Naive thymus-derived CD4-positive, alpha-beta T cell (primary cell): ENCODE measurements at regions of chr20 and their contacts with region 1.

Region 1: GRCh38 chr20:1118336-1119127 is at the start of gene PSMF1:
- DNase-seq: peak; percentile 93 to 99 (median 96)
- ATAC-seq: peak; percentile 98
- H3K4me3 ChIP-seq: peak within 1 kb of the TSS; percentile 98
- H3K4me3 Mint-ChIP-seq: peak within 1 kb of the TSS; percentile 92 to 97 (median 94)
- H3K27ac ChIP-seq: peak within 1 kb of the TSS; percentile 85
- H3K27ac Mint-ChIP-seq: peak within 1 kb of the TSS; percentile 81 to 97 (median 94)
- H3K4me1 ChIP-seq: peaks cover 40 to 45% of the 10 kb centered on the region in 2 donors
- H3K4me1 Mint-ChIP-seq: peaks cover 46 to 68% (median 61%) of the 10 kb centered on the region in 7 donors
- H3K27me3 ChIP-seq: no peaks in the 10 kb centered on the region
- H3K27me3 Mint-ChIP-seq: no peaks in the 10 kb centered on the region
- total RNA-seq, gene PSMF1: 88.7 to 157 (median 114) TPM

Region 2: GRCh38 chr20:543369-544152 is 575.0 kb before region 1 on chr20 and contains the start of gene CSNK2A1:
- CTCF ChIA-PET with region 1: no interaction called
- POLR2A ChIA-PET with region 1: no interaction called
- intact Hi-C with region 1: loop called (anchors 1 to 2 kb)
- DNase-seq: peak; percentile 93 to 99 (median 97)
- ATAC-seq: peak; percentile 97
- H3K4me3 ChIP-seq: peak within 1 kb of the TSS; percentile 59
- H3K4me3 Mint-ChIP-seq: peak within 1 kb of the TSS; percentile 86 to 100 (median 91)
- H3K27ac ChIP-seq: peak within 1 kb of the TSS; percentile 94
- H3K27ac Mint-ChIP-seq: peak within 1 kb of the TSS; percentile 97 to 100 (median 98)
- H3K4me1 ChIP-seq: peaks cover 17 to 39% of the 10 kb centered on the region in 2 donors
- H3K4me1 Mint-ChIP-seq: peaks cover 40 to 58% (median 54%) of the 10 kb centered on the region in 7 donors
- H3K27me3 ChIP-seq: no peaks in the 10 kb centered on the region
- H3K27me3 Mint-ChIP-seq: peaks cover 0 to 9% (median 5%) of the 10 kb centered on the region in 5 donors
- total RNA-seq, gene CSNK2A1: 69.7 to 117 (median 90.8) TPM

Region 3: GRCh38 chr20:986733-987355 is 131.7 kb before region 1 on chr20:
- CTCF ChIA-PET with region 1: no interaction called
- POLR2A ChIA-PET with region 1: no interaction called
- intact Hi-C with region 1: no loop called
- DNase-seq: no peak
- ATAC-seq: no peak
- H3K4me3 ChIP-seq: no peak overlapping the region
- H3K4me3 Mint-ChIP-seq: no peak overlapping the region
- H3K27ac ChIP-seq: no peak overlapping the region
- H3K27ac Mint-ChIP-seq: no peak overlapping the region
- H3K4me1 ChIP-seq: no peaks in the 10 kb centered on the region
- H3K4me1 Mint-ChIP-seq: no peaks in the 10 kb centered on the region
- H3K27me3 ChIP-seq: no peaks in the 10 kb centered on the region
- H3K27me3 Mint-ChIP-seq: peaks cover 13 to 49% (median 30%) of the 10 kb centered on the region in 5 donors

Region 4: GRCh38 chr20:1015181-1015580 is 103.4 kb before region 1 on chr20:
- CTCF ChIA-PET with region 1: no interaction called
- POLR2A ChIA-PET with region 1: no interaction called
- intact Hi-C with region 1: no loop called
- DNase-seq: no peak
- ATAC-seq: no peak
- H3K4me3 ChIP-seq: no peak overlapping the region
- H3K4me3 Mint-ChIP-seq: no peak overlapping the region
- H3K27ac ChIP-seq: no peak overlapping the region
- H3K27ac Mint-ChIP-seq: no peak overlapping the region
- H3K4me1 ChIP-seq: no peaks in the 10 kb centered on the region
- H3K4me1 Mint-ChIP-seq: peaks cover 0 to 3% (median 0%) of the 10 kb centered on the region in 7 donors
- H3K27me3 ChIP-seq: no peaks in the 10 kb centered on the region
- H3K27me3 Mint-ChIP-seq: peaks cover 0 to 25% (median 12%) of the 10 kb centered on the region in 5 donors

Region 5: GRCh38 chr20:1144401-1145172 is 26.1 kb after region 1 on chr20:
- CTCF ChIA-PET with region 1: no interaction called
- POLR2A ChIA-PET with region 1: no interaction called
- intact Hi-C with region 1: no loop called
- DNase-seq: no peak
- ATAC-seq: no peak
- H3K4me3 ChIP-seq: no peak overlapping the region
- H3K4me3 Mint-ChIP-seq: no peak overlapping the region
- H3K27ac ChIP-seq: no peak overlapping the region
- H3K27ac Mint-ChIP-seq: no peak overlapping the region
- H3K4me1 ChIP-seq: no peaks in the 10 kb centered on the region
- H3K4me1 Mint-ChIP-seq: peaks cover 7 to 43% (median 23%) of the 10 kb centered on the region in 7 donors
- H3K27me3 ChIP-seq: no peaks in the 10 kb centered on the region
- H3K27me3 Mint-ChIP-seq: no peaks in the 10 kb centered on the region

Region 6: GRCh38 chr20:1266167-1266973 is 147.8 kb after region 1 on chr20 and contains the start of gene SNPH:
- CTCF ChIA-PET with region 1: no interaction called
- POLR2A ChIA-PET with region 1: no interaction called
- intact Hi-C with region 1: loop called (anchors 1 to 2 kb)
- DNase-seq: peak; percentile 41 to 79 (median 67)
- ATAC-seq: peak; percentile 93
- H3K4me3 ChIP-seq: peak within 1 kb of the TSS; percentile 66
- H3K4me3 Mint-ChIP-seq: peak within 1 kb of the TSS; percentile 79 to 99 (median 93)
- H3K27ac ChIP-seq: peak within 1 kb of the TSS; percentile 88
- H3K27ac Mint-ChIP-seq: peak within 1 kb of the TSS; percentile 77 to 100 (median 98)
- H3K4me1 ChIP-seq: peaks cover 9 to 54% of the 10 kb centered on the region in 2 donors
- H3K4me1 Mint-ChIP-seq: peaks cover 22 to 87% (median 81%) of the 10 kb centered on the region in 7 donors
- H3K27me3 ChIP-seq: no peaks in the 10 kb centered on the region
- H3K27me3 Mint-ChIP-seq: peaks cover 0 to 5% (median 0%) of the 10 kb centered on the region in 5 donors
- total RNA-seq, gene SNPH: 7.3 to 43.4 (median 22.5) TPM

Region 7: DNA sequence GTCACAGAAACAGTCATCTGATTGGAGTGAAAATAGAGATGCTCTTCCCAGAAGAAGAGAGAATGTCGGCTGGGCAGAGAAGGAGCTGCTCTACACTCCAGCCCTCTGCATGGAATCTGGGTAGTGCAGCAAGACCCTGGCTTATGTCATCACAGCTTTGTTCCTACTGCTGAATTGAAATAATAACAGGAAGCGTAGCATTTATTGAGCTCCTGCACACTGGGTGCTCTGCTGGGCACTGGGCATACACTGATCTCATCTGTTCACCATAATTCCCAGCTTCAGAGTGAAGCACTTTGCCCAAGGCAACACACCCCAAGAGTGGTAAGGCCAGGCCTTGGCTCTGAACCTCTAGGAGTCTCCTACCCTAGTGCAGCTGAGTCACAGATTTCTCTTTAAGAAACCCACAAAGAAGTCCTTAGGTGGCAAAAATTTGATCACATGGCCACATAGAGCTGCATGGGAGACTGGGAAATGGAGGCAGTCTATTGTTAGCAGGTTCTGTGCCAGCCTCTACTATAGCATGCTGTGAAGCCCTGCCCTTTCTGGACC is 214.3 kb after region 1 on chr20:
- CTCF ChIA-PET with region 1: no interaction called
- POLR2A ChIA-PET with region 1: no interaction called
- intact Hi-C with region 1: no loop called
- DNase-seq: no peak
- ATAC-seq: no peak
- H3K4me3 ChIP-seq: no peak overlapping the region
- H3K4me3 Mint-ChIP-seq: no peak overlapping the region
- H3K27ac ChIP-seq: no peak overlapping the region
- H3K27ac Mint-ChIP-seq: peak overlapping the region in 3 of 9 donors; percentile 28 to 99 (median 52)
- H3K4me1 ChIP-seq: peaks cover 0 to 15% of the 10 kb centered on the region in 2 donors
- H3K4me1 Mint-ChIP-seq: peaks cover 31 to 67% (median 57%) of the 10 kb centered on the region in 7 donors
- H3K27me3 ChIP-seq: no peaks in the 10 kb centered on the region
- H3K27me3 Mint-ChIP-seq: no peaks in the 10 kb centered on the region

Region 8: GRCh38 chr20:1437235-1437904 is 318.8 kb after region 1 on chr20:
- CTCF ChIA-PET with region 1: no interaction called
- POLR2A ChIA-PET with region 1: no interaction called
- intact Hi-C with region 1: loop called in 1 of 2 experiments (anchors 1 kb)
- DNase-seq: peak; percentile 55 to 79 (median 72)
- ATAC-seq: peak; percentile 72
- H3K4me3 ChIP-seq: no peak overlapping the region
- H3K4me3 Mint-ChIP-seq: peak overlapping the region in 1 of 10 donors; percentile 35
- H3K27ac ChIP-seq: no peak overlapping the region
- H3K27ac Mint-ChIP-seq: peak overlapping the region in 3 of 9 donors; percentile 8 to 73 (median 16)
- H3K4me1 ChIP-seq: peaks cover 11 to 17% of the 10 kb centered on the region in 2 donors
- H3K4me1 Mint-ChIP-seq: peaks cover 25 to 53% (median 49%) of the 10 kb centered on the region in 7 donors
- H3K27me3 ChIP-seq: no peaks in the 10 kb centered on the region
- H3K27me3 Mint-ChIP-seq: peaks cover 0 to 19% (median 0%) of the 10 kb centered on the region in 5 donors

Region 9: DNA sequence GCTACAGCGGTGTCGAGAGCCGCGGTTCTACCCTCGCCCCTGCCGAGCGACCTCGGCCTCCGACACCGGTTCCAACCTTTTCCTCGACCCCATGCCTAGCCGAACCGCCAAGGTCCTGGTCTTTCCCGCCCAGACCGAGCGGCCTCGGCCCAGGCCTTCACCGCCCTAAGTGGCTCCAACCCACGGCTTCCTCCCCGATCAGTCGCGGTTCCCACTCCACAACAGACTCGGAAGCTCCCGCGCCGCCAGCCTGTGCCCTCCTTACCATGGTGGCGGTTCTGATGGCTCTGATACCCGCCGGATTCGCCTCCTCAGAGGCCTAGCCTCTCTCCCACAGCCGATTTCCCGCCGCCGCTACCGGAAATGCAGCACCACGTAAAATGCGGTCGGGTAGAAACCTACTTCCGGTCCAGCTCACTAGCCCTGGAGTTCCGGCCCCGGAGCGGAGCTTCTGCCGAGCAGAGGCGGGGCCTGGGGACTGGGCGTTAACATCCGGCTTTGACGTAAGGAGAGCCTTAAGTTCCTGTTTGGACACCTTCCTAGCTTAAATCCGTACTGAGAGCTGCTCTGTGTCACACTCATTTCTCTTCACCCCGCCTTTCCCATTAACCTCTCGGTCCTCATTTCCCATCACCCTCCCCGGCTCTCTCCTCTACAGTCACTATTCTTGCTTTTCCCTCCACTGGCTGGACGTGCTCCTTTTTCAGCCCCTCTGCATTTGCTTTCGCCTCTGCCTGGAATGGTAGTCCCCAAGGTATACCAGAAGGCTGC is 1352.1 kb after region 1 on chr20 and contains the start of gene SNRPB:
- CTCF ChIA-PET with region 1: no interaction called
- POLR2A ChIA-PET with region 1: no interaction called
- intact Hi-C with region 1: loop called in 1 of 2 experiments (anchors 1 kb)
- DNase-seq: peak; percentile 87 to 97 (median 96)
- ATAC-seq: peak; percentile 97
- H3K4me3 ChIP-seq: peak within 1 kb of the TSS; percentile 70
- H3K4me3 Mint-ChIP-seq: peak within 1 kb of the TSS; percentile 88 to 99 (median 98)
- H3K27ac ChIP-seq: peak within 1 kb of the TSS; percentile 93
- H3K27ac Mint-ChIP-seq: peak within 1 kb of the TSS; percentile 91 to 100 (median 98)
- H3K4me1 ChIP-seq: peaks cover 17 to 18% of the 10 kb centered on the region in 2 donors
- H3K4me1 Mint-ChIP-seq: peaks cover 27 to 45% (median 39%) of the 10 kb centered on the region in 7 donors
- H3K27me3 ChIP-seq: no peaks in the 10 kb centered on the region
- H3K27me3 Mint-ChIP-seq: peaks cover 0 to 2% (median 0%) of the 10 kb centered on the region in 5 donors
- total RNA-seq, gene SNRPB: 83.5 to 323 (median 118) TPM